H1 (cell line): ENCODE measurements at regions of chr13 and their contacts with region 1.

Region 1: DNA sequence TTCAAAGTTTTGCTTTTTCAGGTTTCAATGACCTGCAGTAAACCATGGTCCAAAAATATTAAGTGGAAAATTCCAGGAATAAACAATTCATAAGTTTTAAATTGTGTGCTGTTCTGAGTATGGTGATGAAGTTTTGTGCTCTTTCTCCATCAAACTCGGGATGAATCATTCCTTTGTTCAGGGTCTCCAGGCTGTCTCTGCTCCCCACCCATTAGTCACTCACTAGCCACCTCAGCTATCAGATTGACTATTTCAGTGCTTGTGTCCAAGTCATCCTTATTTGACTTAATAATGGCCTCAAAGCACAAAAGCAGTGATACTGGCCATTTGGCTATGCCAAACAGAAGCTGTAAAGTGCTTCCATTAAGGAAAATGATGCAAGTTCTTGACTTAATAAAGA is 1140.4 kb downstream of the EFNB2 start:
- DNase-seq: no peak
- H3K4me3 ChIP-seq: no peak overlapping the region
- H3K27ac ChIP-seq: no peak overlapping the region
- H3K4me1 ChIP-seq: no peaks in the 10 kb centered on the region
- H3K27me3 ChIP-seq: no peaks in the 10 kb centered on the region
- CTCF ChIP-seq: no peak
- EP300 ChIP-seq: no peak
- POLR2A ChIP-seq: no peak
- RAD21 ChIP-seq: no peak

Region 2: GRCh38 chr13:105370011-105370650 is 24.9 kb before region 1 on chr13:
- CTCF ChIA-PET with region 1: no interaction called
- POLR2A ChIA-PET with region 1: no interaction called
- DNase-seq: no peak
- H3K4me3 ChIP-seq: no peak overlapping the region
- H3K27ac ChIP-seq: no peak overlapping the region
- H3K4me1 ChIP-seq: no peaks in the 10 kb centered on the region
- H3K27me3 ChIP-seq: peaks cover 0 to 1% (median 0%) of the 10 kb centered on the region in 4 experiments; a peak in 1 of 7 replicates
- CTCF ChIP-seq: no peak
- EP300 ChIP-seq: no peak
- POLR2A ChIP-seq: no peak
- RAD21 ChIP-seq: no peak

Region 3: DNA sequence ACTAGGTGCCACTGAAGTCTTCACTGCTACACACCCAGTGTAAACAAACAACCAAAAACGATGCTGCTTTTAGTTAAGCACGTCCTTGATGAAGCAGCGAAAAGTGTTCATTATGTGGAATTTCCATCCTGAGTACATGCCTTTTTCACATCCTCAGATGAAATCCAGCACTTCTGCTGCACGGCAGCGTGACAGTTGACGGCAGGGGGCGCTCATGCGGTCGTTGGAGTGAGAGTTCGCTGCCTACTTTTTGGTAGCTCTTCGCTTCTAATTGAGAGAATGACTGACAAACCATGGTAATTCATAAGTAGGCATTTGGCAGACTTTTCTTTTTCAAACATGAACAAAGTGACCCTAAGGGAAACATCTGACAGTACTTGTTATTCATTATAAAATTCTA is 15.6 kb after region 1 on chr13:
- CTCF ChIA-PET with region 1: interaction called, 14 read pairs
- POLR2A ChIA-PET with region 1: no interaction called
- DNase-seq: peak; percentile 10 to 92
- H3K4me3 ChIP-seq: no peak overlapping the region
- H3K27ac ChIP-seq: no peak overlapping the region
- H3K4me1 ChIP-seq: no peaks in the 10 kb centered on the region
- H3K27me3 ChIP-seq: no peaks in the 10 kb centered on the region
- CTCF ChIP-seq: peak; percentile 64 to 93 (median 88)
- EP300 ChIP-seq: no peak
- POLR2A ChIP-seq: no peak
- RAD21 ChIP-seq: peak; percentile 70 to 80

Region 4: GRCh38 chr13:105595471-105595870 is 200.4 kb after region 1 on chr13:
- CTCF ChIA-PET with region 1: no interaction called
- POLR2A ChIA-PET with region 1: no interaction called
- DNase-seq: no peak
- H3K4me3 ChIP-seq: no peak overlapping the region
- H3K27ac ChIP-seq: no peak overlapping the region
- H3K4me1 ChIP-seq: no peaks in the 10 kb centered on the region
- H3K27me3 ChIP-seq: no peaks in the 10 kb centered on the region
- CTCF ChIP-seq: no peak
- EP300 ChIP-seq: no peak
- POLR2A ChIP-seq: no peak
- RAD21 ChIP-seq: no peak